Activated CD4-positive, alpha-beta memory T cell treated with anti-CD3 and anti-CD28 coated beads for 36 hours (primary cell): ENCODE measurements at regions of chr7 and their contacts with region 1.

Region 1: DNA sequence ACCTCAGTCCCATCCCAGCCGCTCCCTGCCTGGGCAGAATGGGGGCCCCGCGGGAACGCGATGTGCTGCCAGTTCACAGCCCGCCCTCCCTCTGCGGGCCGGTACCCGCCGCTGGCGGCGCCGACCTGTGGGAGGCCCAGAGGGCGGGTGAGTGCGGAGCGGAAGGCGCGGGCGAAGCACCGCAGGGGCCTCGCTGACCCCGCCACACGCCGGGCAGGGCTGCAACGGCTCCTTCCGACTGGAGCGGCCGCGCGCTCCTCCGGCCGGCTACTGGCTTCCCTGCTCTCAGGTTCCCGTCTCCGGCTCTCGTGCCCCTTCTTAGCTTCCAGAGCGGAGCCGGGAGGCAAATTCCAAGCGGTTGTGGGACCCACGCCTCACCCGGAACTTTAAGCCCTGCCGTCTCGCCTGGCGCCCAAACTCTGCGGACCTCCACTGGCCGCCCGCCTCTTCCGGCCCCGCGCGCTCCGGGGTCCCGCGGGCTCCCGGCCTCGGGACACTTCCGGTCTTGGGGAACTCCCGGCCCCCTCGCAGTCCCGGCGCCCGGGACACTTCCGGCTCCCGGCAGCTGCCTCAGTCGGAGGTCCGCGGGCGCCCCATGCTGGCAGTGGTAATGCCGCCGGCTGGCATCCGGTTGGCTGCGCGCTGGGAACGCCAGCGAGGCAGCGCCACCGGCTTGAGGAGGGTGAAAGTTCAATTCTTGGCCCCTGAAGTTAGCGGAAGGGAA is at the start of gene CYREN:
- DNase-seq: peak; percentile 95
- H3K4me3 Mint-ChIP-seq: peak within 1 kb of the TSS; percentile 96
- H3K27ac Mint-ChIP-seq: peak within 1 kb of the TSS; percentile 99
- H3K4me1 Mint-ChIP-seq: peaks cover 45% of the 10 kb centered on the region
- H3K27me3 Mint-ChIP-seq: no peaks in the 10 kb centered on the region
- total RNA-seq, gene CYREN: 41.6 to 43.6 TPM

Region 2: DNA sequence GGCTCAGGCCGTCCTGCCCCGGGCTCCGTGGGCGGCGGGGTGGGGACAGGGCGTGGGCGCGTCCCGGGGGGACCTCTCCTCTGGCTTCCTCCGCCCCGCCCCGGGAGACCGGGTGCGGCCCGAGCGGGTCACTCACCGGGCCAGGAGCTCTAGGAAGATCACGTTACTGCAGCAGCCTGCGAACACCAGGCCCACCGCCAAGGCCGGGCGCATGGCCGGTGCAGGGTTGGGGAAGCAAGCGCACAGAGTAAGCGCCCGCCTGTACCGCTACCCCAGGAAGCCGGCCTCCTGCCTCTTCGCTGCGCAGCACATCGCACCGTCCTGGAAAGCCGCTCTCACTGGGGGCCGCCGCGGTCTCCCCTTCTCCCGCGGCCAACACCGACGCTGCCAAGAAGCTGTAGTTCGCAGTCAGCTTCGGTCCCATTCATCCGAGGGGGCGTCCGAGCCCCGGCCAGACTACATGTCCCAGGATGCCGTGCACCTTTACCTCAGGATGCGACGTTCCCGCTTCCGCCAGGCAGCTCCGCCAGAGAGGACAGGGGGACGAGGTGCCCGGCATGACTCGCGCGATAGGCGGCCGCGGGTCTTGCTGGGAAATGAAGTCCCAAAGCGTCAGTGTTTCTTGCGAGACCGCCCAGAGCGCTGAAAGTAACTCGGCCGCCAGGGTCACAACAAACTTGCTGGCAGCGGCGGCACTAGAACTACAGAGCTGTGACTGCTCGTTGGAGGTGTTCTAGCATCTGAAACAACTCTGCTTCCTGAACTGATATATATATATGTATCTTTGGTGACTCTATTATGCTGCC is 853.7 kb before region 1 on chr7 and contains the start of gene SLC35B4:
- CTCF ChIA-PET with region 1: no interaction called
- POLR2A ChIA-PET with region 1: no interaction called
- intact Hi-C with region 1: loop called (anchors 10 kb)
- DNase-seq: peak; percentile 97
- H3K4me3 Mint-ChIP-seq: peak within 1 kb of the TSS; percentile 90
- H3K27ac Mint-ChIP-seq: peak within 1 kb of the TSS; percentile 72
- H3K4me1 Mint-ChIP-seq: peaks cover 19% of the 10 kb centered on the region
- H3K27me3 Mint-ChIP-seq: no peaks in the 10 kb centered on the region
- total RNA-seq, gene SLC35B4: 10.9 to 14.5 TPM

Region 3: DNA sequence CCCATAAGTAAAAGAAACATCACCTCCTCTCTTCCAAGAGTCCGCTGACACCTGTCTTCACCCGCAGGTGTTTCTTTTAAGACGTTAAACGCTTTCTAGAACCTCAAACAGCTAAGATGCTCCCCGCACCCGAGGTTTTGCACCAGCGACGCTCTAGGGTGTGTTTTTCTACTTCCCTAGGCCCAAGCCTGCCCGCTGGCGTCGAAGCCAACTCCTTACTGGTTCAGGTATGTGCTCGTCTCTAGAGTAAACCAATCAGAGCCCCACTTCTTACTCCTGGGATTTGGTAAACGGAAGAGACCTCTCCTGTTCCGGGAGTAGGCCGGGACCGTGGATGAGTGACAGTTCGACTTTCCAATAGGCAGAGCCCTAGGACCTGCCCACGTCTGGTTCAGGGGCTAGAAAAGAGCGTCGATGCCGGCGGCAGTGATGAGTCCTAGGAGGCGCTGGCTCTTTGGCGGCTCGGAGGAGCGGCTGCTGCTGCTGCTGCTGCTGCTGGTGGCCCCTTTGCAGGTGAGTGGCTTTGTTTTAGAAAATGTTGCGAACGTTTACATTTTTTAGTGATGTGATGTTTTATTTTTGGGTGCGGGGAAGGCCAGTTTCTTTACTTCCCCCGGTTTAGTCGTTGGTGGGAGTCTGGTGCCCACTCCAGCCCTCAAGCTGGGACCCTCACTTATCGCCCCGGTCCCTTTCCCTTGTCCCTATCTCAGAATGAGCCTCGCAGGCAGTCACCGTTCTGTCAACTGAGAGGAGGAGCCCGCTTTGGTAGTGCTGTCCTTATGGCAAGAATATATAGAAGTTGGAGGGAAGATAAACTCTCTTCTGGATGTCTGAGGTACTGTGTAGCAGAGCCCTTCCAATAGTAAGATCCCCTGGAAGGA is 523.8 kb before region 1 on chr7 and contains the start of gene BPGM:
- CTCF ChIA-PET with region 1: interaction called, 3 read pairs
- POLR2A ChIA-PET with region 1: interaction called, 3 read pairs
- intact Hi-C with region 1: loop called (anchors 2 kb)
- DNase-seq: peak; percentile 98
- H3K4me3 Mint-ChIP-seq: no peak within 1 kb of the TSS
- H3K27ac Mint-ChIP-seq: no peak within 1 kb of the TSS
- H3K4me1 Mint-ChIP-seq: peaks cover 32% of the 10 kb centered on the region
- H3K27me3 Mint-ChIP-seq: no peaks in the 10 kb centered on the region
- total RNA-seq, gene BPGM: 23.7 to 24.9 TPM

Region 4: GRCh38 chr7:134737566-134738345 is 432.7 kb before region 1 on chr7:
- CTCF ChIA-PET with region 1: no interaction called
- POLR2A ChIA-PET with region 1: no interaction called
- intact Hi-C with region 1: loop called (anchors 10 kb)
- DNase-seq: peak; percentile 65
- H3K4me3 Mint-ChIP-seq: no peak overlapping the region
- H3K27ac Mint-ChIP-seq: peak overlapping the region; percentile 88
- H3K4me1 Mint-ChIP-seq: peaks cover 41% of the 10 kb centered on the region
- H3K27me3 Mint-ChIP-seq: no peaks in the 10 kb centered on the region

Region 5: GRCh38 chr7:134986363-134987251 is 183.8 kb before region 1 on chr7 and contains the start of gene AGBL3:
- CTCF ChIA-PET with region 1: interaction called, 42 read pairs
- POLR2A ChIA-PET with region 1: interaction called, 15 read pairs
- intact Hi-C with region 1: loop called (anchors 1 kb)
- DNase-seq: peak; percentile 95
- H3K4me3 Mint-ChIP-seq: peak within 1 kb of the TSS; percentile 95
- H3K27ac Mint-ChIP-seq: peak within 1 kb of the TSS; percentile 95
- H3K4me1 Mint-ChIP-seq: peaks cover 35% of the 10 kb centered on the region
- H3K27me3 Mint-ChIP-seq: no peaks in the 10 kb centered on the region
- total RNA-seq, gene AGBL3: 3.3 to 3.4 TPM

Region 6: DNA sequence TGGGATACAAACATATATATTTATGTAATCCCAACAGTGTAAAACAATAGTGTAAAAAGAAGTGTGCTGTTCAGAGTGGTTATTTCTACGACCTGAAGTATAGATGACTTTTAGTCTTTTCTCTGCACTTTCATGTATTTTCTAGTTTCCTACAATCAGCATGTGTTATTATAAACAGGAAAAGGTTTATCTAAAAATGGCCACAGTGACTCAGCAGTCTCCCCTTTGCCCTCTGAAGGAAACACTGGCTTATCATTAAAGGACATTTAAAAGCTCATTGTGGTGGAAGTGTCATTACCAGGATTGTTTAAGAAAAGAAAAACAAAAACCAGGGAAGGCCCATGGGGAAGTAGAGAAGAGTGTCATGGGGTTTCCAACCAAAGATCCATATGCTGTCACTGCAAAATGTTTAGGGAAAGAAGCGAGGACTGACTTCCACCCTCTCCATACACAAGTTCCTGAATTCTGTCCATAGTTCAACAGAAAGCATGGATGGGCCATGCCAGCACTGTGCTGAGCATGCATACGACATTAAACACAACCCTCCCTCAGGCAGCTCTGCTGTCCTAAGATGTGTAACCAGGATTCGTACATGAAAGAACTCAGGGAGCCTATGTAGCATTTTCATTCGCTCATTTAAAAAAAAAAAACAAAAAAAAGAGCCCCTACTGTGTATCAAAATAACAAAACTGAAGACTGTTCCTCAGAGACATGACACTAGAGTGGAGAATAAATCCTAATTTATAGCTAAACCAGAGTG is 10.2 kb before region 1 on chr7:
- CTCF ChIA-PET with region 1: interaction called, 27 read pairs
- POLR2A ChIA-PET with region 1: interaction called, 7 read pairs
- intact Hi-C with region 1: loop called (anchors 1 kb)
- DNase-seq: no peak
- H3K4me3 Mint-ChIP-seq: no peak overlapping the region
- H3K27ac Mint-ChIP-seq: peak overlapping the region; percentile 85
- H3K4me1 Mint-ChIP-seq: peaks cover 28% of the 10 kb centered on the region
- H3K27me3 Mint-ChIP-seq: no peaks in the 10 kb centered on the region

Region 7: GRCh38 chr7:135509903-135510602 is 339.6 kb after region 1 on chr7 and contains the start of gene CNOT4:
- CTCF ChIA-PET with region 1: no interaction called
- POLR2A ChIA-PET with region 1: no interaction called
- intact Hi-C with region 1: loop called (anchors 5 kb)
- DNase-seq: peak; percentile 98
- H3K4me3 Mint-ChIP-seq: no peak within 1 kb of the TSS
- H3K27ac Mint-ChIP-seq: no peak within 1 kb of the TSS
- H3K4me1 Mint-ChIP-seq: peaks cover 9% of the 10 kb centered on the region
- H3K27me3 Mint-ChIP-seq: no peaks in the 10 kb centered on the region
- total RNA-seq, gene CNOT4: 16.1 to 17.4 TPM